GM23248 (cell line): ENCODE measurements at regions of chr14 and their contacts with region 1.

Region 1: GRCh38 chr14:21092273-21093011 is 6.0 kb downstream of the ZNF219 start:
- DNase-seq: peak; percentile 69
- H3K4me3 ChIP-seq: no peak overlapping the region
- H3K27ac ChIP-seq: no peak overlapping the region
- H3K4me1 ChIP-seq: peaks cover 15% of the 10 kb centered on the region
- H3K27me3 ChIP-seq: no peaks in the 10 kb centered on the region

Region 2: GRCh38 chr14:21014761-21015190 is 77.7 kb before region 1 on chr14:
- in situ Hi-C with region 1: loop called (anchors 10 kb)
- DNase-seq: peak; percentile 84
- H3K4me3 ChIP-seq: no peak overlapping the region
- H3K27ac ChIP-seq: no peak overlapping the region
- H3K4me1 ChIP-seq: no peaks in the 10 kb centered on the region
- H3K27me3 ChIP-seq: no peaks in the 10 kb centered on the region; the same call in 1 of the 2 replicates